Ascending aorta (tissue), 2 donors: ENCODE measurements at regions of chr16 and their contacts with region 1.

Region 1: GRCh38 chr16:2513405-2514322 is at the start of gene ATP6V0C:
- DNase-seq: peak; percentile 74 to 95
- H3K4me3 ChIP-seq: peak within 1 kb of the TSS; percentile 81 to 98
- H3K27ac ChIP-seq: peak within 1 kb of the TSS; percentile 96 to 97
- H3K4me1 ChIP-seq: peaks cover 12 to 42% of the 10 kb centered on the region in 2 donors
- H3K27me3 ChIP-seq: no peaks in the 10 kb centered on the region
- CTCF ChIP-seq: no peak
- total RNA-seq, gene ATP6V0C: 91.9 TPM

Region 2: DNA sequence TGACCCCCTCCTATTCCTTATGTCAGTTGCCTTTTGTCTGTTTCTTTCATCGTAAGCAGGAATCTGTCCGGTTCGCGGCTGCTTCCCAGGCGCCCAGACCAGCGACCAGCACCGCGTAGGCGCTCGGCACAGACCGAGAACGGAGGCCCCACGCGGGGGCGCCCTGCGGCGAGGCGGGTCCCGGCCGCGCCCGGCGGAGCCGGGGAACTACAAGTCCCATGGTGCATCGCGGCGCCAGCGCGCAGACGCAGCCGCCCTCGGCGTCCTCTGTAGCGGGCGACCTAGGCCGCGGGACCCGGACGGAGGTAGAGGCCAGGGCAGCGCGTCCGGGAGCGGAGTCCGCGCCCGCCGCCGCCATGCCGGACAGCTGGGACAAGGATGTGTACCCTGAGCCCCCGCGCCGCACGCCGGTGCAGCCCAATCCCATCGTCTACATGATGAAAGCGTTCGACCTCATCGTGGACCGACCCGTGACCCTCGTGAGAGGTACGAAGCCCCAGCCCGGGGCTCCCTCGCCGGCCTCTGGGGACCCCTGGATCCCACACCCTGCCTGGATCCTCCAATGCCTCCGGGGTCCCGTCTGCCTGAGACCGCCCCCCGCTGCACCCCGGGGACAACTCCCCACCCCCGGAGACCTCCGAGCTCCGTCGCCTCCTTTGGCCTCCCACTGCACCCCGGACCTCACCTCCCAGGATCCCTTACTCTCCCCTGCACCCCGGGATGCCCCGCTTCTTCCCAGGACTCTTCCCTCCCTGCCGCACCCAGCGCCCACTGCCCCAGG is 554.2 kb before region 1 on chr16 and contains the start of gene NDUFB10:
- intact Hi-C with region 1: loop called (anchors 10 kb)
- DNase-seq: peak; percentile 52 to 94
- H3K4me3 ChIP-seq: peak within 1 kb of the TSS; percentile 86 to 90
- H3K27ac ChIP-seq: peak within 1 kb of the TSS; percentile 74 to 80
- H3K4me1 ChIP-seq: peaks cover 3 to 20% of the 10 kb centered on the region in 2 donors
- H3K27me3 ChIP-seq: no peaks in the 10 kb centered on the region
- CTCF ChIP-seq: peak; percentile 50 to 78 (median 57)
- total RNA-seq, gene NDUFB10: 68.2 TPM

Region 3: DNA sequence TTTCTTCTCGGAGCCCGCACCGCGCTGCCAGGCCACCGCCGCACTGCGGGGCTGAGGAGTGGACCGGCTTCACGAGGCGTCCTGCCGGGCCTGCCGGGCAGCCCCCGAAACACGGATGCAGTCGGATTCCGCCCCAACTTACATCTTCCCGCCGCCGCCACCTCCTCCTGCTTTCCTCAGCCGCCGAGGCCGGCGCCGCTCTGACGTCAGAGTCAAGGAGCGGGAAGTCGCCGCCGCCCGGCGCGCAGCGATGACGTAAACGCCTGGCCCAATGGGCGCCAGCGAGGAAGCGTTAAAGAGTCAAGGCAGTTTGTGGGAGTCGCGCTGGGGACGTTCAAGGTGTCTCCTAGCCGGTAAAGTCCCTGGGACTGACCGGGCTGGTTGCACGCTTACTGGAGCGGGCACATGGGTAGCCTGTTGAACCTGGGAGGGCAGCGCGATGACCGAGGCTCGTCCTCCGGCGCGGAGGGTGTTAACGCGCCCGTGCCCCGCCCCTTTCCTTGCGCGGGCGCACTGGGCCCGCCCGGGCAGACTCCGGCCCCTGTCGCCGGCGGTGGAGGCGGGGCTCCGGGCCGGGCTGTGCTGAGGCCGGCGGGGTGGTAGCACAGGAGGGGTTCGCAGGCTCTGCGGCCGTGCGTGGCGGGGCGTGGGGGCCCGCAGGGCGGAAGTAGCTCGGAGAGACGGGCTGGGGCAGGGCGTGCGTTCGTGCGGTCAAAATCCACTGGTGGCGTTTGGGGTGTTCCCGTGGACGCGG is 245.6 kb before region 1 on chr16 and contains the start of gene RNPS1:
- intact Hi-C with region 1: loop called (anchors 5 kb)
- DNase-seq: peak; percentile 77 to 98
- H3K4me3 ChIP-seq: peak within 1 kb of the TSS; percentile 63 to 92
- H3K27ac ChIP-seq: peak within 1 kb of the TSS; percentile 95 to 98
- H3K4me1 ChIP-seq: peaks cover 10 to 21% of the 10 kb centered on the region in 2 donors
- H3K27me3 ChIP-seq: no peaks in the 10 kb centered on the region
- CTCF ChIP-seq: no peak
- total RNA-seq, gene RNPS1: 134 TPM

Region 4: DNA sequence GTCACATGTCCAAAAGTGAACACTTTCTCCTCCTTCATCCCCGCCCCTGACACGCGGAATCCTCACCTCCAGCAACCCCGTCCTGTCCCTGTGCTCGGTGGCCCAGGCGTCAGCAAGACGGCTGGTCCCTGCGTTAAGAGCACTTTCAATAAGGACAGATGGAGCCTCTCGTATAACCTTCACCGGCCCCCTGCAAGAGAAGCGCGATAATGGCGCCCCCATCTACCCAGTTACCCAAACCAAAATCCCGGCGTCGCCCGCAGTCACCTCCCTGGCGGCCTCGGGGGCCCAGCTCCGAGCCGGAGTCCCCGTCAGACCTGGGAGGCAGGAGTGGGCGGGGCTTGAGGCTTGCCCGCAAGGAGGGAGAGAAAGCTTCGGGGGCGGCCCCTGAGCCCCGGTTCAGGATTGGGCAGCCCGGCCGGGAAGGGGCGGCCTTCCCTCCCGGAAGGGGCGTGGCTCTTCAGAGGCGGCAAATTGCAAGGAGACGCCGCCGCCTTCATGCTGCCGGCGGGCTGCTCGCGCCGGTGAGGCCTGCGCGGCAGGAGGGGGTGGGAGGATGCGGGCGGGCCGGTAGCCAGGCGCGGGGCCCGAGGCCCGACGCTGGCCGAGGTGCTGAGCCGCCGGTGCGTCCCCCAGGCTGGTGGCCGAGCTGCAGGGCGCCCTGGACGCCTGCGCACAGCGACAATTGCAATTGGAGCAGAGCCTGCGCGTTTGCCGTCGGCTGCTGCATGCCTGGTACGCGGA is 53.8 kb before region 1 on chr16 and contains the start of gene TEDC2:
- intact Hi-C with region 1: loop called (anchors 2 kb)
- DNase-seq: peak; percentile 79 to 98
- H3K4me3 ChIP-seq: peak within 1 kb of the TSS; percentile 61 to 67
- H3K27ac ChIP-seq: no peak within 1 kb of the TSS
- H3K4me1 ChIP-seq: peaks cover 0 to 8% of the 10 kb centered on the region in 2 donors
- H3K27me3 ChIP-seq: no peaks in the 10 kb centered on the region
- CTCF ChIP-seq: no peak
- total RNA-seq, gene TEDC2: not detected

Region 5: DNA sequence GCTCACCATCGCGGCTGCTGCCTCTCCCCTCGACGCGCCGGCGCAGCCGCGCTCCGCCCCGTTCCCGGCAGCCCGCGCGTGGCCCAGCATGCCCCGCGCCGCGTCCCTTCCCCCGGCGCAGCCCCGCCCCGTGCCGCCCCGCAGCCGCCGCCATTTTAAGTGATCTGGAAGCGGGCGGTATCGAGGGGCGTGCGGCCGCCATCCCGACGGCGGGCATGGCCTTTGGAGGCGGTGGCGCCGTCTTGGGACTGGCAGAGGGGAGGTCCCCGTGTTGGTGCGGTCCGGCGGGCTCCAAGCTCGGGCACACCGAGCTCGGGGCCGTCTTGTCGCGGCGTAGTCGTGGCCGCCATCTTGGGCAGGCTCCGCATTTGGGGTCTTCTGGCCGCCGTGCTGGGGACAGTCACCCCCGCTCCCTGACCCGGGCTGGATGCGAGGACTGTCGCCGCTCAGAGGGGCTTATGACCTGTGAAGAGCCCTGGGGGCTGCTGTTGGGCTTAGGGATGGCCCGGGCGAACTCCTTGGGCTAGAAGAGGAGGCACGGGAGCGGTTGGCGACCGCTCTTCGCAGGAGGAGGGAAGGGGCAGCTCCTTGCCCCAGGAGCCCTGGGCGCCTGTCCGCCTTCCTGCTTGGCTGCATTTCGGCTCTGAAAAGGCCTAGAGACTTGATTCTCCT is 263.7 kb after region 1 on chr16 and contains the start of gene ELOB:
- intact Hi-C with region 1: loop called (anchors 10 kb)
- DNase-seq: peak; percentile 57 to 92
- H3K4me3 ChIP-seq: peak within 1 kb of the TSS; percentile 91 to 100
- H3K27ac ChIP-seq: peak within 1 kb of the TSS; percentile 99 to 100
- H3K4me1 ChIP-seq: peaks cover 9 to 17% of the 10 kb centered on the region in 2 donors
- H3K27me3 ChIP-seq: no peaks in the 10 kb centered on the region
- CTCF ChIP-seq: no peak
- total RNA-seq, gene ELOB: 1,184 TPM